H1 (cell line): ENCODE measurements at regions of chr5 and their contacts with region 1.

Region 1: GRCh38 chr5:159515909-159516415 is 185.7 kb upstream of the IL12B start:
- DNase-seq: peak; percentile 58 to 84
- H3K4me3 ChIP-seq: no peak overlapping the region
- H3K27ac ChIP-seq: no peak overlapping the region
- H3K4me1 ChIP-seq: no peaks in the 10 kb centered on the region
- H3K27me3 ChIP-seq: no peaks in the 10 kb centered on the region
- CTCF ChIP-seq: peak; percentile 82 to 95 (median 86)
- EP300 ChIP-seq: no peak
- POLR2A ChIP-seq: no peak
- RAD21 ChIP-seq: peak; percentile 83 to 84

Region 2: DNA sequence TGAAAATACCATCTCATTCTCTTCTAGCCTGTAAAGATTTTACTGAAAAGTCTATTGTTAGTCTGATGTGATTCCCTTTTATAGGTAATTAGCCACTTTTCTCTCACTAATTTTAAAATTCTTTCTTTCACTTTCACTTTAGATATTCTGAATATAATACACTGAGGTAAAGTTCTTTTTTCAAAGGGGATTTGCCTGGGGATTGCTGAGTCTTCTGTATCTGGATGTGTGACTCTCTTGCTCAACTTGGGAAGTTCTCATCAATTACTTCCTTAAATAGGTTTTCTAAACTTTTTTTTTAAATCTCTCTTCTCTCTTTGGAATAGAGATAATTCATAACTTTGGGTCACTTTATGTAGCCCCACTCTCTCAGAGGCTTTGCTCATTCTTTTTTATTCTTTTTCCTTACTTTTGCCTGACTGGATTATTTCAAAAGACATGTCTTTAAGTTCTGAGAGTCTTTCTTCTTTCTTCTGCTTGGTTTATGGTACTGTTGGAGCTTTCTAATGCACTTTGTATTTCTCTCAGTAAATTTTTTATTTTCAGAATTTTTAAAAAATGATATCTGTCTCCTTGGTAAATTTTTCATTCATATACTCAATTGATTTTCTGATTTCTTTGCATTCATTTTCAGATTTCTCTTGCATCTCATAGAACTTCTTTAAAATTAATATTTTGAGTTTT is 129.8 kb before region 1 on chr5:
- CTCF ChIA-PET with region 1: no interaction called
- POLR2A ChIA-PET with region 1: no interaction called
- DNase-seq: no peak
- H3K4me3 ChIP-seq: no peak overlapping the region
- H3K27ac ChIP-seq: no peak overlapping the region
- H3K4me1 ChIP-seq: no peaks in the 10 kb centered on the region; a peak in 1 of 7 replicates
- H3K27me3 ChIP-seq: no peaks in the 10 kb centered on the region
- CTCF ChIP-seq: no peak
- EP300 ChIP-seq: no peak
- POLR2A ChIP-seq: no peak
- RAD21 ChIP-seq: no peak

Region 3: DNA sequence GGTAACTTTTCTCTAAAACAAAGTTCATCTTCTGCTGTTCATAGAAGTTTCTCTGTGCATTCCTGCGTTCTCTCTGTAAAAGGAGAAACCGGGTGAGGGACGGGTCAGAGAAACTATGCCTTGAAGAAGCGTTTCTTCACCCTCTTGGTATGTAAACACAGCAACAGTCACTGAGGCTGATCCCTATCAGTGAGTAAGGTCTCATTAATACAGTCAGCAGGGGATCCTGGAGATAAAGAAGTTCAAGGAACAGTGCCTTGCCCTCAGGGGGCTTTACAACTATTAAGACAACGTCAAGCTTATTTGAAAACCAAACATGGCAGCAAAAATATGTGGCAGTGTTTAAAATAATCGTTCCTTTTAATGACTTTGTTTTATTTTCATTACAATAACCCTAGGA is 17.2 kb after region 1 on chr5:
- CTCF ChIA-PET with region 1: interaction called, 37 read pairs
- POLR2A ChIA-PET with region 1: no interaction called
- DNase-seq: no peak
- H3K4me3 ChIP-seq: no peak overlapping the region
- H3K27ac ChIP-seq: no peak overlapping the region
- H3K4me1 ChIP-seq: no peaks in the 10 kb centered on the region
- H3K27me3 ChIP-seq: no peaks in the 10 kb centered on the region
- CTCF ChIP-seq: no peak
- EP300 ChIP-seq: no peak
- POLR2A ChIP-seq: no peak
- RAD21 ChIP-seq: no peak

Region 4: DNA sequence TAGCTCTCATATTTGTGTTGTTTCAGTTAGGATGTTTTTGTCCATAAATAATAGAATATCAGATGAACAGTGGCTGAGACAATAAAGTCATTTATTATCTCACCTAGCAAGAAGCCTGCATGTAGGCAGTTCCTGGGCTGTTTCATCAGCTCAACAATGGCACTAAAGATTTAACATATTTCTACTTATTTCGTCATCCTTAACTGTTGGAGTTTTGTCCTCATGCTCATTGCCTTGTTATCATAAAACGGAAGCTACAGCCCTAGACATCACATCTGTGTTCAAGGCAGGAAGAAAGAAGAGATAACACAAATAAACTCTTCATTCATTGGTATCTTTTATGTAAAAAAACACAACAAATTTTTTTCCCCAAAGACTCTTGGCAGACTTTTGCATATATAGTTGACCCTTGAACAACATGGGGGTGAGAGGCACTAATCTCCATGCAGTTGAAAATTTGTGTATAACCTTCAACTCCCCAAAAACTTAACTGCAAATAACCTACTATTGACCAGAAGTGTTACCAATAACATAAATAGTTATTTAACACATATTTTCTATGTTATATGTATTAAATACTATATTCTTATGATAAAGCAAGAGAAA is 123.1 kb after region 1 on chr5:
- CTCF ChIA-PET with region 1: interaction called, 11 read pairs
- POLR2A ChIA-PET with region 1: no interaction called
- DNase-seq: no peak
- H3K4me3 ChIP-seq: no peak overlapping the region
- H3K27ac ChIP-seq: no peak overlapping the region
- H3K4me1 ChIP-seq: peaks cover 0 to 2% (median 0%) of the 10 kb centered on the region in 4 experiments; a peak in 2 of 7 replicates
- H3K27me3 ChIP-seq: no peaks in the 10 kb centered on the region
- CTCF ChIP-seq: no peak
- EP300 ChIP-seq: no peak
- POLR2A ChIP-seq: no peak
- RAD21 ChIP-seq: no peak

Region 5: DNA sequence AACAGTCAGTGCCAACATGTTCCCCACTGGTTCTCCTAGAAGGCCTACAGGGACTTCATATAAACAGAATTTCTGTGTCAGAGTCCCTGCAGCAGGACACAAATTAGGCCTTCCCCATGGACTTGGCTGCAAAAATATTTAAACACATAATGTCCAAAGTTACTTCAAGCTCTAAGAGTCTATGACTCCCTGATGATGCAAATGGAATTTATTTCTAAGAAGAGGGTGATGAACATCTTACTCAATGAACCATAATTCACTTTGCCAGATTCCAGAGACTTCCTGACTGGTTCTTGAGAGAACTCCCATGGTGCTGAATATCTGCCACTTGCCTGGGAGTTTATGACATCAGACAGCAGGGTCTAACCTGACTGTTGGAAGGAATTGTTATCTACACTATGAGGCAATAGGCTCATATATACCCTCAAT is 367.6 kb after region 1 on chr5:
- CTCF ChIA-PET with region 1: no interaction called
- POLR2A ChIA-PET with region 1: no interaction called
- DNase-seq: no peak
- H3K4me3 ChIP-seq: no peak overlapping the region
- H3K27ac ChIP-seq: no peak overlapping the region
- H3K4me1 ChIP-seq: peaks cover 2 to 5% (median 5%) of the 10 kb centered on the region in 4 experiments; a peak in 4 of 7 replicates
- H3K27me3 ChIP-seq: no peaks in the 10 kb centered on the region
- CTCF ChIP-seq: no peak
- EP300 ChIP-seq: no peak
- POLR2A ChIP-seq: no peak
- RAD21 ChIP-seq: no peak

Region 6: GRCh38 chr5:159915904-159916840 is 400.2 kb after region 1 on chr5 and contains the start of gene ADRA1B:
- CTCF ChIA-PET with region 1: interaction called, 11 read pairs
- POLR2A ChIA-PET with region 1: no interaction called
- DNase-seq: peak; percentile 38 to 81
- H3K4me3 ChIP-seq: peak within 1 kb of the TSS; percentile 38 to 73 (median 58)
- H3K27ac ChIP-seq: no peak within 1 kb of the TSS
- H3K4me1 ChIP-seq: no peaks in the 10 kb centered on the region; a peak in 2 of 7 replicates
- H3K27me3 ChIP-seq: peaks cover 6 to 34% (median 25%) of the 10 kb centered on the region in 4 experiments
- CTCF ChIP-seq: peak; percentile 57 to 70 (median 67)
- EP300 ChIP-seq: no peak
- POLR2A ChIP-seq: no peak
- RAD21 ChIP-seq: peak; percentile 80 to 87
- total RNA-seq, gene ADRA1B: not detected in 2 replicates